ENCODE measurements at regions of chr2 and their contacts with region 1.

Region 1: DNA sequence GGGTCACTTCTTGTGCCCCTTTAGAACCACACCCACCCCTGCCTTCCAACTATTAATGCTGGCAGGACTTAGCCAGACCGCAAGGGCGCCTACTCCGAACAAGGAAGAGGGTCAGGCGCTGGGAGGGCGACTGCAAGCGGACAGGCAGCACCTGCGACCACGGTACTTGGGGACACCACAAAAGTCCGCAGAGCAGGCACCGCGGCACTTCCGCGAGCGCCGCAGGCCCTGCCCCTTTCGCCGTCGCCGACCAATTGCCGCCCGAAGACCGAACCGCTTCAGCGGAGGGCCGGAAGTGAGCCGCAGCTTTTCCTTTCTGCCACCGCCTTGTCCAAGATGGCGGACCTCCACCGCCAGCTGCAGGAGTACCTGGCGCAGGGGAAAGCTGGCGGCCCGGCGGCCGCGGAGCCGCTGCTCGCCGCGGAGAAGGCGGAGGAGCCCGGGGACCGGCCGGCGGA is at the start of gene SFT2D3:
- DNase-seq: peak; percentile 94
- H3K4me3 ChIP-seq: peak within 1 kb of the TSS; percentile 66
- H3K27ac ChIP-seq: peak within 1 kb of the TSS; percentile 96
- H3K4me1 ChIP-seq: peaks cover 24% of the 10 kb centered on the region
- H3K27me3 ChIP-seq: no peaks in the 10 kb centered on the region
- CTCF ChIP-seq: no peak
- total RNA-seq, gene SFT2D3: 7.1 and 7.6 TPM in 2 replicates

Region 2: GRCh38 chr2:127810619-127811396 is 109.6 kb after region 1 on chr2 and contains the start of gene WDR33:
- CTCF ChIA-PET with region 1: no interaction called
- POLR2A ChIA-PET with region 1: interaction called, 13 read pairs
- intact Hi-C with region 1: loop called (anchors 5 kb)
- DNase-seq: peak; percentile 96
- H3K4me3 ChIP-seq: peak within 1 kb of the TSS; percentile 81
- H3K27ac ChIP-seq: peak within 1 kb of the TSS; percentile 95
- H3K4me1 ChIP-seq: peaks cover 17% of the 10 kb centered on the region
- H3K27me3 ChIP-seq: no peaks in the 10 kb centered on the region
- CTCF ChIP-seq: no peak
- total RNA-seq, gene WDR33: 83.8 and 87.1 TPM in 2 replicates

Region 3: DNA sequence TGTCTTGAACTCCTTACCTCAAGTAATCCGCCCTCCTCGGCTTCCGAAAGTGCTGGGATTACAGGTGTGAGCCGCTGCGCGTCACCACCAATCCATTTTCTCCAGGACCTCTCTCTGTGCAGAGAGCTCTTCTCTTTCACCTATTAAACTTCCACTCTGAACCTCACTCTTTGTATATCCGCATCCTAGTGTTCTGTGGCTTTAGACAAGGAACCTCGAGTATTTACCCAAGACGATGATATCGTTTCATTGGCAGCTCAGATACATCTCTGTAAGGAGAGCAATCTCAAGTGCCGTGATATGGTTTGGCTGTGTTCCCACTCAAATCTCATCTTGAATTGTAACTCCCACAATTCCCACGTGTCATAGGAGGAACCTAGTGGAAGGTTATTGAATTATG is 124.8 kb after region 1 on chr2:
- CTCF ChIA-PET with region 1: no interaction called
- POLR2A ChIA-PET with region 1: no interaction called
- intact Hi-C with region 1: no loop called
- DNase-seq: no peak
- H3K4me3 ChIP-seq: no peak overlapping the region
- H3K27ac ChIP-seq: no peak overlapping the region
- H3K4me1 ChIP-seq: no peaks in the 10 kb centered on the region
- H3K27me3 ChIP-seq: no peaks in the 10 kb centered on the region
- CTCF ChIP-seq: no peak

Region 4: GRCh38 chr2:128054104-128054503 is 352.9 kb after region 1 on chr2:
- CTCF ChIA-PET with region 1: no interaction called
- POLR2A ChIA-PET with region 1: interaction called, 15 read pairs
- intact Hi-C with region 1: no loop called
- DNase-seq: no peak
- H3K4me3 ChIP-seq: no peak overlapping the region
- H3K27ac ChIP-seq: no peak overlapping the region
- H3K4me1 ChIP-seq: no peaks in the 10 kb centered on the region
- H3K27me3 ChIP-seq: no peaks in the 10 kb centered on the region
- CTCF ChIP-seq: no peak

Region 5: DNA sequence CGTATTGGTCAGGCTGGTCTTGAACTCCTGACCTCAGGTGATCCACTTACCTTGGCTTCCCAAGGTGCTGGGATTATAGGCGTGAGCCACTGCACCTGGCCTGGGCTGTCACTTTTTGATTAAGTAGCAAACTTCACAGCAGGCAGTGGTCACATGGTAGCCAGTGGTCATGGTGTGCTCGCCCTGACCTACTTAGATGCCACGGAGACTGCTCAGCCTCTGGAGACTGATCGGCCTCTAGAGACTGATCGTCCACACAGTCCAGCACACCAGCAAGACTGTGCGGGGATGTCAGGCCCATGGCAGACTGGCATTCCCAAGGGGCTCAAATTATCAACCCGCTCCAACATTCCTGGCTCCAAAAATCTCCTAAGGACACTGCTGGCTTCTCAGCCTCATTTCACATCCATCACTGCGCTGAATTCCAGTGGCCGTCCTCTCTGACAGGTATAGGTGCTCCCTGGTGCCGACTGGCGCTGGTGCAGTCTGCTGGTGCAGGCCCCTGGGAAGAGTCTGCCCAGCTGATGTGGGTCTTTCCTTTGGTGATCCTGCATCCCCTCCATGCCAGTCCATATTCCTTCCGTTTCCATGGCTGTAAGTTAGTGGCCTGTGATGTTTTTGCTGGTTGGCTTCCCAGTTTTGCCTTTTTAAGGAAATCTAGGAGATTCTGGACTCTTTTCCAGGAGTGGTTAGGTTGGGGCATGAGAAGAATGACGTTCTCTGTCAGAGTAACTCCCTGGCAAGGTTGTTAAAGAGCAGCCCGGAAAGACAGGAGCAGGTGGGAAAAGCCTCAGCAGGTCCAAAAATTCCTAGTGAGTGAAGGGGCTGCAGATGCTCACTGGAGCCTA is 991.9 kb after region 1 on chr2:
- CTCF ChIA-PET with region 1: no interaction called
- POLR2A ChIA-PET with region 1: no interaction called
- intact Hi-C with region 1: no loop called
- DNase-seq: no peak
- H3K4me3 ChIP-seq: no peak overlapping the region
- H3K27ac ChIP-seq: no peak overlapping the region
- H3K4me1 ChIP-seq: no peaks in the 10 kb centered on the region
- H3K27me3 ChIP-seq: no peaks in the 10 kb centered on the region
- CTCF ChIP-seq: no peak

Measured in A673 (cell line).